ENCODE measurements at regions of chr2 and their contacts with region 1.

Region 1: DNA sequence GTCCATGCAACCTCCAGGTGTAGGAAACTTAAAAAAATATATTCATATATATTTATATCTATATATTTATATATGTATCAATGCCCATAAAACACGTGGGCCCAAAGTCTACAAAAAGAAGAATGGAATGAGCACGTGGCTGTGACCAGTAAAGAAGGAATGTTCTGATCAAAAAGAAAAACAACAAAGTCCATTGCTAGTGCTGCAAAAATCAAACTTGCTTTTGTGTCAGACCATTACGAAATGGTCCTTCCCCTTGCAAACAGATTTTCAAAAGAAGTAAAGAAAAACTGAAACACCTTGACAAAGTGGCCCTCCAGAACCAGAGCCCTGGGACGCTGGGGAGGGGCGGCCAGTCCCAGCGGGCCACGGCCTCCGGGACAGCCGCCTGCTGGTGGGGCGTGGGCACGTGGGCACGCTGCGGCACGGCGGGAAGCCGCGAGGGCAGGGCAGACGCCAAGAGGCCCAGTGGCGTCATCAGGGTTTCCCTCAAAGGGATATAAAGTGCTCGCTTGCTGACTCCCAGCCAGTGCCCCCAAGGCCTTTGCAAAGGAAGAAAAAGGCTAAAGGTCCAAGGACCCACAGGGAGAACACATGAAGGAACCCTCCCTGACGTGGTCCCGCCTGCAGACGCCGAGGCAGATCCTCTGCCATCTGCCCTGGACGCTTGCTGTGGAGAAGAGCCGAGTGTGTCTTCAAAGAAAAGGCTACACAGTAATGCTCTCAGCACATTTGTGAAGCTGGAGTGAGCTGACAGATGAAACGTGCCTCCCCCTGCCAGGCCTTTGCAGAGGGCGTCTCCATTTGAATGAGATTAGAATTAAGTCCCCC is 201.8 kb downstream of the TWIST2 start:
- DNase-seq: peak in 2 of 5 donors; percentile 7 to 30
- ATAC-seq: no peak
- H3K4me3 ChIP-seq: no peak overlapping the region
- H3K27ac ChIP-seq: no peak overlapping the region
- H3K4me1 ChIP-seq: peaks cover 0 to 3% (median 0%) of the 10 kb centered on the region in 12 donors
- H3K27me3 ChIP-seq: no peaks in the 10 kb centered on the region
- CTCF ChIP-seq: no peak
- POLR2A ChIP-seq: no peak

Region 2: DNA sequence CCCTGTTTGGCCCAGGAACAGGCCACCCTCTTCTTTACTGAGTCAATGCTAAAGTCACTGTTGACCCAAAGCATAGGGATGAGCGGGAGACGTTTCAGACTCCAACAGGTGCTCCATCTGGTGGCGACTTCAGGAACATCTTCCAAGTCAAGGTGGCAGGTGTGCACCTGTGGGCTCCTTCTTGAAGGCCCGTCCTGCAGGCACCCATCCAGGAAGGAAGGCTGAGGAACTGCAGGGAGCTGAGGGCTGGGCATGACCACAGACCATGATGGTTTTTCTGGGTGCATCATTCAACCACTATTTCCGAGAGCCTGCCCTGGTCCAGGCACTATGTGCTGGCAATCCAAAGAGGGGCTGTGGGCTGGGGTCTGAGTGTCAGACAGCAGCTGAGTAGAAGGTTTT is 832.7 kb after region 1 on chr2:
- intact Hi-C with region 1: loop called in 1 of 10 experiments (anchors 10 kb)
- DNase-seq: peak in 3 of 5 donors; percentile 31 to 50 (median 32)
- ATAC-seq: peak in 3 of 4 donors; percentile 62 to 73 (median 72)
- H3K4me3 ChIP-seq: no peak overlapping the region
- H3K27ac ChIP-seq: no peak overlapping the region
- H3K4me1 ChIP-seq: peaks cover 0 to 8% (median 0%) of the 10 kb centered on the region in 12 donors
- H3K27me3 ChIP-seq: peaks cover 0 to 9% (median 0%) of the 10 kb centered on the region in 9 donors
- CTCF ChIP-seq: peak; percentile 45 to 73 (median 58)
- POLR2A ChIP-seq: no peak

Measured in heart left ventricle (tissue), 16 donors.